Activated CD4-positive, alpha-beta T cell treated with anti-CD3 and anti-CD28 coated beads for 36 hours (primary cell): ENCODE measurements at regions of chr3 and their contacts with region 1.

Region 1: GRCh38 chr3:51799879-51800749 is 21.1 kb upstream of the IQCF6 start:
- DNase-seq: no peak
- ATAC-seq: peak; percentile 53
- H3K4me3 Mint-ChIP-seq: no peak overlapping the region
- H3K27ac Mint-ChIP-seq: no peak overlapping the region
- H3K4me1 Mint-ChIP-seq: peaks cover 18% of the 10 kb centered on the region
- H3K27me3 Mint-ChIP-seq: peaks cover 12% of the 10 kb centered on the region

Region 2: GRCh38 chr3:51384726-51385473 is 415.2 kb before region 1 on chr3 and contains the start of gene MANF:
- CTCF ChIA-PET with region 1: no interaction called
- POLR2A ChIA-PET with region 1: no interaction called
- intact Hi-C with region 1: loop called (anchors 2 to 10 kb)
- DNase-seq: peak; percentile 99
- ATAC-seq: peak; percentile 97
- H3K4me3 Mint-ChIP-seq: peak within 1 kb of the TSS; percentile 93
- H3K27ac Mint-ChIP-seq: peak within 1 kb of the TSS; percentile 99
- H3K4me1 Mint-ChIP-seq: peaks cover 46% of the 10 kb centered on the region
- H3K27me3 Mint-ChIP-seq: no peaks in the 10 kb centered on the region
- total RNA-seq, gene MANF: 124 to 129 TPM

Region 3: GRCh38 chr3:51718547-51719409 is 81.3 kb before region 1 on chr3:
- CTCF ChIA-PET with region 1: interaction called, 25 read pairs
- POLR2A ChIA-PET with region 1: no interaction called
- intact Hi-C with region 1: loop called (anchors 1 to 2 kb)
- DNase-seq: peak; percentile 87
- ATAC-seq: peak; percentile 91
- H3K4me3 Mint-ChIP-seq: no peak overlapping the region
- H3K27ac Mint-ChIP-seq: no peak overlapping the region
- H3K4me1 Mint-ChIP-seq: peaks cover 15% of the 10 kb centered on the region
- H3K27me3 Mint-ChIP-seq: no peaks in the 10 kb centered on the region

Region 4: DNA sequence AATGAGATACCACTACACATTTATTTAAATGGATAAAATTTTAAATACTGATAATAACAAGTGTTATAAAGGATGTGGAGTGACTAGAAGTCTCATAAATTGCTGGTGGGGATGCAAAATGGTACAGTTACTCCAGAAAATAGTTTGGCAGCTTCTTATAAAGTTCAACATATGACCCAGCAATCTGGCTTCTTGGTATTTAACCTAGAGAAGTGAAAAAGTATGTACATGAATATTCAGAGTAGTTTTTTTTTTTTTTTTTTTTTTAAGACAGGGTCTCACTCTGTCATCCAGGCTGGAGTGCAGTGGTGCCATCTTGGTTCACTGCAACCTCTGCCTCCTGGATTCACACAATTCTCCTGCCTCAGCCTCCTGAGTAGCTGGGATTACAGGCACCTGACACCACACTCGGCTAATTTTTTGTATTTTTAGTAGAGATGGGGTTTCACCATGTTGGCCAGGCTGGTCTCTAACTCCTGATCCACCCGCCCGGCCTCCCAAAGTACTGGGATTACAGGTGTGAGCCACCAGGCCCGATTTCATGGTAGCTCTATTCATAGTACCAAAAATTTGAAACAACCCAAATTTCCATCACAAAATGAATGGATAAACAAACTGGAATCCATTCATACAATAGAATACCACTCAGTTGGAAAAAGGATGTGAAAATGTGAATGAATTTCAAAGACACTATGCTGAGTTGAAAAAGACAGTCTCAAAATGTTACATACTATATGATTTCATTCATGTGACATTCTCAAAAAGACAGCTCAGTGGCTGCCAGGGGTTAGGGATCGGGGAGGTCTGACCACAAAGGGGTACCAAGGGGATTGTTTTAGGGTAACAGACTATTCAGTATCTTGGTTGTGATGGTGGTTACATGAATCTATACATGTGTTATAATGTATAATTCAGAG is 127.2 kb after region 1 on chr3:
- CTCF ChIA-PET with region 1: no interaction called
- POLR2A ChIA-PET with region 1: interaction called, 10 read pairs
- intact Hi-C with region 1: no loop called
- DNase-seq: no peak
- ATAC-seq: no peak
- H3K4me3 Mint-ChIP-seq: no peak overlapping the region
- H3K27ac Mint-ChIP-seq: no peak overlapping the region
- H3K4me1 Mint-ChIP-seq: no peaks in the 10 kb centered on the region
- H3K27me3 Mint-ChIP-seq: no peaks in the 10 kb centered on the region